CD8-positive, alpha-beta T cell (primary cell): ENCODE measurements at regions of chr3 and their contacts with region 1.

Region 1: DNA sequence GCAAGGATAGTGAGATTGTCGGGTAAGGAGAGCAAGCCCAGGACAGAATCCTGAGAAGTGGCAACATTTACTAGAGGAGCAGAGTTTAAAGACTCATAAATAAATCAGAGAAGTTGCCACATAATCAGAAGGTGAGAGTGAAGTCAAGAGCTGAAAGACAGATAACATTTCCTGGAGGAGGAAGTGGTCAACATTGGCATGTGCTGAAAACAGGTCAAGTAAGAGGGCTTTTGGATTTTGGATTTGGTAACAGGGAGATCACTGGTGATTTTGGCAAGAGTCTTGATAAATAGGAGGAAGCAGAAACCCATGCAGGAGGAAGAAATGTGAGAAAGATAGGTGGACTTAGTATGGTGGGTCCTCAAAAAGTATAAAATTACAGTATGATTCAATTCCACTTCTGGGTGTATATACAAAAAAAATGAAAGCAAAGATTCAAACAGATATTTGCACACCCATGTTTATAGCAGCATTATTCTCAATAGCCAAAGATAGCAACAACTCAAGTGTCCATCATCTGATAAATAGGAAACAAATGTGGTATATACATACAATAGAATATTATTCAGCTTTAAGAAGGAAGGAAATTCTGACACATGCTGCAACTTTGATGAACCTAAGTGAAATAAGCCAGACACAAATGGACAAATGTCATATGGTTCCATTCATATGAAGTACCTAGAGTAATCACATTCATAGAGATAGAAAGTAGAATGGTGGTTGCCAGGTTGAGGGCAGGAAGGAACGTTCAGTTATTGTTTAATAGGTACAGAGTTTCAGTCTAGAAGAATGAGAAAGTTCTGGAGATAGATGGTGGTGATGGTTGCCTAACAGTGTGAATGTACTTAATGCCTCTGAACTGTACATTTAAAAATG is 27.3 kb upstream of the MBNL1 start:
- DNase-seq: peak in 2 of 9 experiments; percentile 40 to 62
- ATAC-seq: no peak
- H3K4me3 ChIP-seq: peak overlapping the region in 1 of 2 experiments; percentile 6
- H3K4me3 Mint-ChIP-seq: peak overlapping the region; percentile 92
- H3K27ac ChIP-seq: peak overlapping the region; percentile 11 to 71
- H3K27ac Mint-ChIP-seq: peak overlapping the region; percentile 96
- H3K4me1 ChIP-seq: peaks cover 51% of the 10 kb centered on the region
- H3K4me1 Mint-ChIP-seq: peaks cover 61% of the 10 kb centered on the region
- H3K27me3 ChIP-seq: no peaks in the 10 kb centered on the region
- H3K27me3 Mint-ChIP-seq: no peaks in the 10 kb centered on the region
- CTCF ChIP-seq: no peak

Region 2: DNA sequence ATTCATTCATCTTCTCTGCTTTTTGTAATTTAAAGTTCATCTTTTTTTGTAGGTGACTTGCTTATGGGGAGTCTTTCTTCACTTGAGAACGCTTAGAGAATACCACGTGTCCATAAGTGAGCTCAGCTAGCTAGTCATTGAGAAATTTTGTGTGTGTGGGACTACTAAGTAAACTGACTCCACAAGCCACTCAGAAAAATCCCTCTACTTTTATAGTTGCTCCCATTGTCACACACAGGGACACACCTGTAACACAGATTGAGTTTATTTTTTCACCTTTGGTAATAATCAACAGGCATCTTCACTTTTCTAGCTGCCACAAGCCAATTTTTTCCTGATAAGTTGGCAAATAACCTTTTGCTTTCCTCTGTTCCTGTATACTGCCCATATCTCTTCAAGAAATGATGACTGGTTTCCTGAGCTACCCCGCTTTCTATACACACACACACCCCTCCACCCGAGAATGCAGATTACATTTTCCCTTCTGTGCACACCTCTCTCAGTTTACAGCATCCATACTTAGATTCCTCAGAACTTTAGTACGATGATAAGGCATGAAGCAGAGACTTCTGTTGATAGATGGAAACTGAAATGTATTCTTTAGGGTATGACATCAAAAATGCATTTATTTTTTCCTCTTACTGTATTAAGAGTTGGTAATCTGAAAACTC is 1828.7 kb before region 1 on chr3:
- CTCF ChIA-PET with region 1: no interaction called
- POLR2A ChIA-PET with region 1: no interaction called
- intact Hi-C with region 1: no loop called
- DNase-seq: peak in 2 of 9 experiments; percentile 13 to 37
- ATAC-seq: no peak
- H3K4me3 ChIP-seq: peak overlapping the region; percentile 11 to 90
- H3K4me3 Mint-ChIP-seq: peak overlapping the region; percentile 89
- H3K27ac ChIP-seq: no peak overlapping the region
- H3K27ac Mint-ChIP-seq: no peak overlapping the region
- H3K4me1 ChIP-seq: peaks cover 48% of the 10 kb centered on the region
- H3K4me1 Mint-ChIP-seq: peaks cover 64% of the 10 kb centered on the region
- H3K27me3 ChIP-seq: no peaks in the 10 kb centered on the region
- H3K27me3 Mint-ChIP-seq: no peaks in the 10 kb centered on the region
- CTCF ChIP-seq: no peak

Region 3: GRCh38 chr3:152199102-152199840 is 42.1 kb before region 1 on chr3:
- CTCF ChIA-PET with region 1: interaction called, 11 read pairs
- POLR2A ChIA-PET with region 1: interaction called, 12 read pairs
- intact Hi-C with region 1: loop called in 1 of 2 experiments (anchors 5 kb)
- DNase-seq: peak in 2 of 9 experiments; percentile 49 to 69
- ATAC-seq: peak; percentile 43
- H3K4me3 ChIP-seq: peak overlapping the region; percentile 12 to 26
- H3K4me3 Mint-ChIP-seq: peak overlapping the region; percentile 79
- H3K27ac ChIP-seq: peak overlapping the region; percentile 52 to 78
- H3K27ac Mint-ChIP-seq: peak overlapping the region; percentile 93
- H3K4me1 ChIP-seq: peaks cover 61% of the 10 kb centered on the region
- H3K4me1 Mint-ChIP-seq: peaks cover 75% of the 10 kb centered on the region
- H3K27me3 ChIP-seq: no peaks in the 10 kb centered on the region
- H3K27me3 Mint-ChIP-seq: no peaks in the 10 kb centered on the region
- CTCF ChIP-seq: no peak

Region 4: DNA sequence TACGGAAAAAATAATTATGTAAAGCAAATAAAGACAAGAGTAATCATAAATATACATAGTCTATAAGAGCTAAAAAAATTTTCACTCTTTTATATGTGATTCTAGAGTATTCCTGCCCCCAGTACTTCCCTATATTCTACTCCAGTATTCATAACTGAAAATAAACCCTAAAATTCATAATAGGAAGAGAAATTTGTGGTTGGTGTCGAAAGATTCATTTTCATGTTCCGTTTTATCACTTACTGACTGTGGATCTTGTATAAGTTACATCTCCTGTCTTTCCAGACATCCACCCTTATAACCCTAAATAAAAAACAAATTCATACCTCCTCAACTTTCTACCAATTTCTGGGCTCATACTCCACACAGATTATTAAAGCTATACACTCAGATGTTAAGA is 11.4 kb after region 1 on chr3:
- CTCF ChIA-PET with region 1: interaction called, 10 read pairs
- POLR2A ChIA-PET with region 1: interaction called, 14 read pairs
- intact Hi-C with region 1: loop called in 1 of 2 experiments (anchors 1 kb)
- DNase-seq: no peak
- ATAC-seq: no peak
- H3K4me3 ChIP-seq: no peak overlapping the region
- H3K4me3 Mint-ChIP-seq: peak overlapping the region; percentile 53
- H3K27ac ChIP-seq: peak overlapping the region in 1 of 2 experiments; percentile 78
- H3K27ac Mint-ChIP-seq: peak overlapping the region; percentile 91
- H3K4me1 ChIP-seq: peaks cover 55% of the 10 kb centered on the region
- H3K4me1 Mint-ChIP-seq: peaks cover 71% of the 10 kb centered on the region
- H3K27me3 ChIP-seq: no peaks in the 10 kb centered on the region
- H3K27me3 Mint-ChIP-seq: no peaks in the 10 kb centered on the region
- CTCF ChIP-seq: no peak

Region 5: DNA sequence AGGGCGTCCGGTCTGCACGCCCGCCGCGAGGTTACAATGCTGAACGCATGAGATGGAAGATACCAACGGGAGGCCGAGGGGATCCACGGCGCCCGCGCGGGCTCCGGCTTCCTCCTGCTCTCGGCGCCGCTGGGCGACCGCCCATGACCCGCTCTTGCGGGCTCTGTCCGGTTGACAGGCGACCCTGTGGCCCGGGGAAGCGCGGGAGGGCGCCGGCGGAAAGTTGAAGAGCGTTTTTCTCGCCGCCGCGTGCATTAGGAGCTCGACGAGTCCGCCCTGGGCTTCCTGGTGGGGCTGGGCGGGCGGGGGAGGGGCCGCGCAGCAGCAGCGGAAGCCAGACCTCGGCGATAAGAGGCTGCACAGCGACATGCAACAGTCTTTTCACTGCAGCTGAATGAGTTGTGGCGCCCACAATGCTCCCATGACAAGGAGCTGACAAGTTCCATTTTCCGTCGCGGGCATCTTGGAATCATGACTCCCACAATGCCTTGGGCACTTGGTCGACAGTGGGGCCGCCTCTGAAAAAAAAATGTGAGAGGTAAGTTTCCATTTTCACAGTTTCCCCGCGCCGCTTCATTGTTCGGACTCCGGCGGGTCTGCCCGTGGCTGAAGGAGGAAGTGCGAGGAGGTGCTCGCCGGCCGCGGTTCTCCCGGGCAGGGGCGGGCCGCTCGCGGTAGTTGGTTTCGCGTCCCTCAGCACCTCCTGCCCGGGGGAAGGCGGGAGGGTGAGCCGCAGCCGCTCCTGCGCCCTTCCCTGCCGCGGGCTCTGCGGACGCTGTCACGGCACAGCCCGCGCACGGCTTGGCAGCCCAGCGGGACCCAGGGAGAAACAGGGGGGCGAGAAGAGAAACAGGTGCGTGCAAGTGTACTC is 27.4 kb after region 1 on chr3 and contains the start of gene MBNL1:
- CTCF ChIA-PET with region 1: interaction called, 7 read pairs
- POLR2A ChIA-PET with region 1: interaction called, 88 read pairs
- intact Hi-C with region 1: loop called (anchors 1 to 2 kb)
- DNase-seq: peak; percentile 67 to 95 (median 84)
- ATAC-seq: peak; percentile 54
- H3K4me3 ChIP-seq: peak within 1 kb of the TSS; percentile 92 to 94
- H3K4me3 Mint-ChIP-seq: peak within 1 kb of the TSS; percentile 96
- H3K27ac ChIP-seq: peak within 1 kb of the TSS; percentile 89 to 96
- H3K27ac Mint-ChIP-seq: peak within 1 kb of the TSS; percentile 95
- H3K4me1 ChIP-seq: peaks cover 50% of the 10 kb centered on the region
- H3K4me1 Mint-ChIP-seq: peaks cover 61% of the 10 kb centered on the region
- H3K27me3 ChIP-seq: no peaks in the 10 kb centered on the region
- H3K27me3 Mint-ChIP-seq: no peaks in the 10 kb centered on the region
- CTCF ChIP-seq: no peak
- total RNA-seq, gene MBNL1: 515 to 529 TPM

Region 6: GRCh38 chr3:152754303-152754702 is 512.9 kb after region 1 on chr3:
- CTCF ChIA-PET with region 1: no interaction called
- POLR2A ChIA-PET with region 1: no interaction called
- intact Hi-C with region 1: no loop called
- DNase-seq: no peak
- ATAC-seq: no peak
- H3K4me3 ChIP-seq: no peak overlapping the region
- H3K4me3 Mint-ChIP-seq: no peak overlapping the region
- H3K27ac ChIP-seq: no peak overlapping the region
- H3K27ac Mint-ChIP-seq: no peak overlapping the region
- H3K4me1 ChIP-seq: no peaks in the 10 kb centered on the region
- H3K4me1 Mint-ChIP-seq: no peaks in the 10 kb centered on the region
- H3K27me3 ChIP-seq: no peaks in the 10 kb centered on the region
- H3K27me3 Mint-ChIP-seq: no peaks in the 10 kb centered on the region
- CTCF ChIP-seq: no peak